Natural killer cell (primary cell): ENCODE measurements at regions of chr3 and their contacts with region 1.

Region 1: DNA sequence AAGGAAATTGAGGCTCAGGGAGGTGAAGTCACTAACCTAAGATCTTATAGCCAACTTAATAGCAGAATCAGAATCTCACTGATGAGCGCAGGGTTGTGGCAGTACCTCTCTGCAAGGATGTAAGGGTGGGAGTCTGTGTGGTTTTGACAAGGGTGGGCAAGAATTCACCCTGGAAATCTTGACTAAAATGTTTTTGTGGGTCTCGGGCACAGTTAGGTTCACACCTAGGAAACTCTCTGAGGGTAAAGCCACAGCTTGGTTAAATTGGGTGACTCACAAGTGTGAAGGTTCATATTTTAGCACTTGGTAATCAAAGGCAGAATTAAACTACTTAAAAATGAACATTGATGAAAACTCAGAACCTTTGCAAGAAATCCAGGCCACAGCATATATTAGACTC is 178.2 kb upstream of the EOMES start:
- DNase-seq: peak; percentile 32 to 64
- ATAC-seq: peak; percentile 79 to 91 (median 83)
- H3K4me3 ChIP-seq: no peak overlapping the region
- H3K4me3 Mint-ChIP-seq: peak overlapping the region; percentile 78
- H3K27ac ChIP-seq: no peak overlapping the region
- H3K27ac Mint-ChIP-seq: peak overlapping the region; percentile 64 to 72
- H3K4me1 ChIP-seq: peaks cover 18% of the 10 kb centered on the region
- H3K4me1 Mint-ChIP-seq: peaks cover 60 to 68% of the 10 kb centered on the region in 2 donors
- H3K27me3 ChIP-seq: no peaks in the 10 kb centered on the region
- H3K27me3 Mint-ChIP-seq: peaks cover 2 to 9% of the 10 kb centered on the region in 2 donors
- CTCF ChIP-seq: no peak

Region 2: GRCh38 chr3:27840807-27841594 is 59.3 kb before region 1 on chr3:
- intact Hi-C with region 1: loop called (anchors 5 kb)
- DNase-seq: peak in 1 of 2 donors; percentile 12
- ATAC-seq: peak; percentile 83 to 95 (median 84)
- H3K4me3 ChIP-seq: no peak overlapping the region
- H3K4me3 Mint-ChIP-seq: peak overlapping the region; percentile 51
- H3K27ac ChIP-seq: peak overlapping the region; percentile 14
- H3K27ac Mint-ChIP-seq: peak overlapping the region in 1 of 2 donors; percentile 30
- H3K4me1 ChIP-seq: peaks cover 18% of the 10 kb centered on the region
- H3K4me1 Mint-ChIP-seq: peaks cover 32 to 39% of the 10 kb centered on the region in 2 donors
- H3K27me3 ChIP-seq: no peaks in the 10 kb centered on the region
- H3K27me3 Mint-ChIP-seq: peaks cover 22 to 23% of the 10 kb centered on the region in 2 donors
- CTCF ChIP-seq: no peak

Region 3: DNA sequence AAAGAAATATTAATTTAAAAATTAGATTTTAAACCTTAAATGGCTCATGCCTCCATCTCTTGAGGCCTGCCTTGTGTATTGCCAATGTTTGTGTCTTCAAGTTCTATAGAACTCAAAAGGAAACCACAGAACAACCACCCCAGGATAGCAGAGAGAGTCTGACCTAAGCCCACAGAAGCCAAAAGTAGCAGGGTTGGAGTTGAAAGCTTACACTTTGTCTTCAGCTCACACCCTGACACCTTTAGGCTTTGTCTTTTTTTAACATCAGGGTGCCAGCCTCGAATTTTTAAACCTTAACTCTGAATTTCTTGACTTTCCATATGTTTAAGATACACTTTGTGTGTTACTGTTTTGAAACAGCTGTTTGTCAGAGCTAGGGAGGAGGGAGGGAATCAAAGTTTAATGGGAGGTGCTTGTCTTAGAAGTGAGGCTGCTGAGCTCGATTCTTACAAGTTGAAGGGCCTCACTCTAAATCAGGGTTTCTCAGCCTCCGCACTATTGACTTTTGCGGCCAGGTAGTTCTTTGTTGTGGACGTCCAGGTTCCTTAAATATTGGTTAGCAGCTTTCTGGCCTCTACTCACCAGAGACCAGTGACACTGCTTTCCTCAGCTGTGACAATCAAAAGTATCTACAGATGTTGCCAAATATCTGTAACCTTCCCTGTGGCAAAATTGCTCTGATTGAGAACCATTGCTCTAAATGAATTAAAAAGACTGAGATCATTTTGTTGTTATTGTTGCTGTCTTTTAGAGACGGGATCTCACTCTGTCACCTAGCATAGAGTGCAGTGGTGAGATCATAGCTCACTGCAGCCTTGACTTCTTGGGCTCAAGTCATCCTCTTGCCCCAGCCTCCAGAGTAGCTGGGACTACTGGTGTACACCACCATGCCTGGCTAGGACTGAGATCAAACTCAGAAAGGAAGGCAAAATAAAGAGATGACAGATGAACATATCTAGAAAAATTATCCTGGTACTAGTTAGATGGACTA is 39.0 kb before region 1 on chr3:
- intact Hi-C with region 1: loop called (anchors 1 kb)
- DNase-seq: peak in 1 of 2 donors; percentile 65
- ATAC-seq: peak; percentile 90 to 99 (median 92)
- H3K4me3 ChIP-seq: no peak overlapping the region
- H3K4me3 Mint-ChIP-seq: peak overlapping the region; percentile 50
- H3K27ac ChIP-seq: peak overlapping the region; percentile 13
- H3K27ac Mint-ChIP-seq: peak overlapping the region; percentile 61 to 69
- H3K4me1 ChIP-seq: peaks cover 26% of the 10 kb centered on the region
- H3K4me1 Mint-ChIP-seq: peaks cover 39 to 40% of the 10 kb centered on the region in 2 donors
- H3K27me3 ChIP-seq: no peaks in the 10 kb centered on the region
- H3K27me3 Mint-ChIP-seq: peaks cover 0 to 3% of the 10 kb centered on the region in 2 donors
- CTCF ChIP-seq: no peak

Region 4: GRCh38 chr3:28089527-28089897 is 189.2 kb after region 1 on chr3:
- intact Hi-C with region 1: loop called (anchors 5 kb)
- DNase-seq: peak in 1 of 2 donors; percentile 35
- ATAC-seq: peak; percentile 66 to 86 (median 71)
- H3K4me3 ChIP-seq: no peak overlapping the region
- H3K4me3 Mint-ChIP-seq: peak overlapping the region; percentile 59
- H3K27ac ChIP-seq: peak overlapping the region; percentile 58
- H3K27ac Mint-ChIP-seq: peak overlapping the region; percentile 80 to 84
- H3K4me1 ChIP-seq: peaks cover 13% of the 10 kb centered on the region
- H3K4me1 Mint-ChIP-seq: peaks cover 49 to 51% of the 10 kb centered on the region in 2 donors
- H3K27me3 ChIP-seq: no peaks in the 10 kb centered on the region
- H3K27me3 Mint-ChIP-seq: no peaks in the 10 kb centered on the region
- CTCF ChIP-seq: no peak

Region 5: GRCh38 chr3:28252001-28252431 is 351.7 kb after region 1 on chr3:
- intact Hi-C with region 1: loop called (anchors 5 kb)
- DNase-seq: peak in 1 of 2 donors; percentile 74
- ATAC-seq: peak; percentile 87 to 94 (median 93)
- H3K4me3 ChIP-seq: no peak overlapping the region
- H3K4me3 Mint-ChIP-seq: peak overlapping the region; percentile 80
- H3K27ac ChIP-seq: peak overlapping the region; percentile 63
- H3K27ac Mint-ChIP-seq: peak overlapping the region; percentile 75 to 89
- H3K4me1 ChIP-seq: peaks cover 29% of the 10 kb centered on the region
- H3K4me1 Mint-ChIP-seq: peaks cover 57 to 60% of the 10 kb centered on the region in 2 donors
- H3K27me3 ChIP-seq: no peaks in the 10 kb centered on the region
- H3K27me3 Mint-ChIP-seq: no peaks in the 10 kb centered on the region
- CTCF ChIP-seq: no peak